AG04449 (cell line): ENCODE measurements at regions of chr11 and their contacts with region 1.

Region 1: GRCh38 chr11:110434952-110435779 is 5.4 kb downstream of the FDX1 start:
- DNase-seq: no peak
- H3K4me3 ChIP-seq: no peak overlapping the region
- CTCF ChIP-seq: no peak

Region 2: GRCh38 chr11:109772841-109773400 is 662.2 kb before region 1 on chr11:
- CTCF ChIA-PET with region 1: no interaction called
- POLR2A ChIA-PET with region 1: no interaction called
- DNase-seq: no peak
- H3K4me3 ChIP-seq: no peak overlapping the region
- CTCF ChIP-seq: no peak

Region 3: GRCh38 chr11:110356756-110357671 is 78.2 kb before region 1 on chr11:
- CTCF ChIA-PET with region 1: no interaction called
- POLR2A ChIA-PET with region 1: no interaction called
- DNase-seq: no peak
- H3K4me3 ChIP-seq: no peak overlapping the region
- CTCF ChIP-seq: no peak

Region 4: DNA sequence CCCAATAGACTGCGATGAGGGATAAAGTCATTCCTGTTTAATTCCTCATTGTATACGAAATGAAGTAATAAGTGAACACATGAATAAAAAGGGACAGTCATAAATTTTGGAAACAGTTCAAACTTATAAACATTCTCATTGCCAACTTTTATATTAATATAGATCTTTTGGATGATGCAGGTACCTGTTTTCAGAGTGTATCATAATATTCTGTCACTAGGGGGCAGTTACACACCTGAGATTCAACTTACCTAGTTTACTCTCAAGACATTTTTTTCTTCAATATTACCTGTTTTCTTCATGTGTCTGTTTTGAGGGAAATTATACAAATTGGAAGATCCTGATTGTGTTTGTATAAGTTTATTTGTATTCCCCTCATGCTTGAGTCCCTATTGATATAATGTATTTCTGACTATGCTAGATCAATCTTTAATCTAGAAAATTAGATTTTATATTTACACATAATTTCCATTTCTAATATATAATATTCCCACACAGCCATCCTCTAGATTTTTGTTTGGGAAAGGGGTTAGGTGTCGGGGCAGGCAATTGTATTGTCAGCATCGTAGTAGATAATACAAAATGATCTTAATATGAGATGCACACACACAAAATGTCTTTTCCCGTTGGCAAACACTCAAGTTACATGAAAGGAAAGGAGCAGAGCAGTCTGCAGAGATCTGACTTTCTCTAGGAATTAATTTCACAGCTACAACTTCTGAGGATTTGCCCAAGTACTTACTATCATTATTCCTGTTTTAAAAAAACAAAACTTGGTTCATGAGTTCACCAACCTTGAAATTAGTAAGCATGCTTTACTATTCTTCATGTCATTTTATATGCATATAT is 13.0 kb after region 1 on chr11:
- CTCF ChIA-PET with region 1: interaction called, 20 read pairs
- POLR2A ChIA-PET with region 1: no interaction called
- DNase-seq: no peak
- H3K4me3 ChIP-seq: no peak overlapping the region
- CTCF ChIP-seq: no peak